Panc1 (cell line): ENCODE measurements at regions of chr10 and their contacts with region 1.

Region 1: DNA sequence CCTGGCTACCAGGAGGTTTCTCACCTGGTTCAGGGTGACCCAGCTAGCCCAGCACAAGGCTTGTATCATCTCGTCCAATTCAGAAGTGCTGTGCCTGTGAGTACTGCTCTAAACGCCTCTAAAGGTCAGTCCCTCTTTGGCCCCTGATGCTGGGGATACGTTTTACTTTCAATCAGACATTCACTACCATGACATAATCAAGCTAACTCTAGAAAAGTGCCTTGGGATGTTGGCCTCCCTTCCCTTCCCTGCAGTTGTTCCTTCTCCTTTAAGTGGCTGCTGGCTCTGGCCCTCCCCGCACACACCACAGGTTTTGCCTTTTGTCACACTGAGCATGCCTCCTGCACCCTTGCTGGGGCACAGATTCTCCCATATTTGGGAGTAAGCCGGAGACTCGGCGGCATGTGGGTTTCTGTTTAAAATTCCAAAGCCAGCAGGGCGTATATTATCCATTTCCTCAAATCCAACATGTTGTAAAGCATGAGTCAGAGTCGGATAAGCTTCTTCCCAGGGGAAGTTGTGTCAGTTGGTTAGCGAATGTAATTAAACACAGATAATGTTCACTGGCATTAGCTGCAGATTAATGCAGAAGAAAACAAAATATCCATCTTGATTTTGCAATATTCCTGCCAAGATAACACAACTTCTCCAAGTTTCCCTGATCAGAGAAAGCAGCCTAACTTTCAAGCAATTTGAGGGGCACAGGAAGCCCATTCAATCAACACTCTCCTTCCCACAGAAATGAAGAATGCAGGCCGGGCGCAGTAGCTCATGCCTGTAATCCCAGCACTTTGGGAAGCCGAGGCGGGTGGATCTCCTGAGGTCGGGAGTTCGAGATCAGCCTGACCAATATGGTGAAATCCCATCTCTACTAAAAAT is 31.8 kb upstream of the VCL start:
- DNase-seq: peak; percentile 97
- ATAC-seq: peak; percentile 96
- H3K4me3 ChIP-seq: peak overlapping the region; percentile 10 to 47; a peak in 3 of 4 replicates
- H3K27ac ChIP-seq: peak overlapping the region; percentile 99
- H3K4me1 ChIP-seq: peaks cover 57% of the 10 kb centered on the region
- H3K27me3 ChIP-seq: no peaks in the 10 kb centered on the region
- CTCF ChIP-seq: no peak

Region 2: DNA sequence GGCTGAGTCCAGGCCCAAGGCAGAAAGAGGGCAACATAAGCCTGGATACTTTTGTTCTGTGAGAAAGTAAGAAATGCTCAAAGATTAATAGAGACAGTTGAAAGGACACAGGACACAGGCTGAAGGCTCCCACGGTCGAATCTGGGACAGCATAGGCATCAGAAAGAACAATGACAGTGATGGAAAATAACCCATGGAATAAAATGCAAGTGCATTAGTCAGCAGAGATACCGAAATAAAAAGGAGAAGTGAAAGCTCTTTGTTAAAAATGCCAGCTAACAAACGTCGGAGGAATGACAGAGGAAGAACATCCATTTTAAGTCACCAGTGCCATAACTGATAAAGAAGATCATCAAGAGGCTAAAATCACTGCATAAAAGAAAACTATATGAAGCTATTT is 248.6 kb before region 1 on chr10:
- CTCF ChIA-PET with region 1: no interaction called
- POLR2A ChIA-PET with region 1: no interaction called
- in situ Hi-C with region 1: no loop called
- intact Hi-C with region 1: no loop called
- DNase-seq: no peak
- ATAC-seq: no peak
- H3K4me3 ChIP-seq: no peak overlapping the region
- H3K27ac ChIP-seq: no peak overlapping the region
- H3K4me1 ChIP-seq: no peaks in the 10 kb centered on the region
- H3K27me3 ChIP-seq: no peaks in the 10 kb centered on the region
- CTCF ChIP-seq: no peak

Region 3: DNA sequence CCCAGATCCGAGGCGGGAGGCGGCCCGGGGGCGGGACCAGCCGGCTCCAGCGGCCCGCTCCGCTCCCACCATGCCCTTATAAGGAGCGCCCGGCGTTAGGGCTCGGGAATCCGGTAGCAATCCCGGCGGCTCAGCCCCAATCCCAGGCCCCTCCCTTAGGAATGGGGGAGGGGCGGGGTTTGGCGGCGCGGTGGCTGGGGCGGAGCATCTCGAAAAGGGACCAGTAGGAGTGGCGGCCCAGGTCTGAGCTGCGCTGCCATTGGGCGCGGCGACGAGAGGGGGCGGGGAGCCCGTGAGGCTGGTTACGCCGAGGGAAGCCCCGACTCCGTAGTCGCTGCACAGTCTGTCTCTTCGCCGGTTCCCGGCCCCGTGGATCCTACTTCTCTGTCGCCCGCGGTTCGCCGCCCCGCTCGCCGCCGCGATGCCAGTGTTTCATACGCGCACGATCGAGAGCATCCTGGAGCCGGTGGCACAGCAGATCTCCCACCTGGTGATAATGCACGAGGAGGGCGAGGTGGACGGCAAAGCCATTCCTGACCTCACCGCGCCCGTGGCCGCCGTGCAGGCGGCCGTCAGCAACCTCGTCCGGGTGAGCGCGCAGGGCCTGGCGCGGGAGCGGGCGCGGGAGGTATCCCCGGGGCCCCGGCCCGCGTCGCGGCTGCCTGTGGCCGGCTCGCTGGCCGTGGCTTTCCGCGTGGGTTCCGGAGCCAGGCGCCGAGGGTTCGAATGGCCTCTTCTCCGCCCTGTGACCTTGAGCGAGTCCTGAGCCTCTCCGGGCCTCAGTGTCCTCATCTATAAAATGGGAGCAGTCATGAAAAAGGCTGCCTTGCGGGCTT is 31.9 kb after region 1 on chr10 and contains the start of gene VCL:
- CTCF ChIA-PET with region 1: interaction called, 3 read pairs
- POLR2A ChIA-PET with region 1: interaction called, 13 read pairs
- in situ Hi-C with region 1: no loop called
- intact Hi-C with region 1: no loop called
- DNase-seq: no peak
- ATAC-seq: peak; percentile 93
- H3K4me3 ChIP-seq: peak within 1 kb of the TSS; percentile 69 to 95
- H3K27ac ChIP-seq: peak within 1 kb of the TSS; percentile 98
- H3K4me1 ChIP-seq: peaks cover 43% of the 10 kb centered on the region
- H3K27me3 ChIP-seq: no peaks in the 10 kb centered on the region
- CTCF ChIP-seq: no peak
- total RNA-seq, gene VCL: 495 TPM

Region 4: GRCh38 chr10:74008212-74008731 is 42.1 kb after region 1 on chr10:
- CTCF ChIA-PET with region 1: no interaction called
- POLR2A ChIA-PET with region 1: no interaction called
- in situ Hi-C with region 1: loop called (anchors 10 kb)
- intact Hi-C with region 1: no loop called
- DNase-seq: no peak
- ATAC-seq: no peak
- H3K4me3 ChIP-seq: no peak overlapping the region
- H3K27ac ChIP-seq: peak overlapping the region; percentile 70
- H3K4me1 ChIP-seq: peaks cover 83% of the 10 kb centered on the region
- H3K27me3 ChIP-seq: no peaks in the 10 kb centered on the region
- CTCF ChIP-seq: no peak

Region 5: DNA sequence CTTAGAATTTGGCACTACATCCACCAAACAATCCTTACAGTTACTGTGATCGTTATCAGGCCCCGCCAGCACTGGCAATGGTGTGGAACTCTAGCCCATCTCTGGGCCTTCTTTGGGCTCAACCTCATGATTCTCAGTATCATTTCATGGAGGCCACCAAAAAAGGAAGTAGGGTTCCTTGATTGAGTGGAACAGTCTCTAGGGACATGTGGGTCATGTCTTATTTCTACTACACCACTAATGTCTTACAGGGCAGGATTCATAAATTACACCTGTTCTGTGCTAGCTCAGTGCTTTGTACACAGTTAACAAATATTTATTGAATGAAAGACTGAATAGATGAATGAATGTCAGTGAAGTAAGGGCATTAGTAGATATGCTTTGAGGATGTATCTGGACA is 130.6 kb after region 1 on chr10:
- CTCF ChIA-PET with region 1: no interaction called
- POLR2A ChIA-PET with region 1: no interaction called
- in situ Hi-C with region 1: no loop called
- intact Hi-C with region 1: no loop called
- DNase-seq: no peak
- ATAC-seq: no peak
- H3K4me3 ChIP-seq: no peak overlapping the region
- H3K27ac ChIP-seq: no peak overlapping the region
- H3K4me1 ChIP-seq: no peaks in the 10 kb centered on the region
- H3K27me3 ChIP-seq: no peaks in the 10 kb centered on the region
- CTCF ChIP-seq: no peak

Region 6: DNA sequence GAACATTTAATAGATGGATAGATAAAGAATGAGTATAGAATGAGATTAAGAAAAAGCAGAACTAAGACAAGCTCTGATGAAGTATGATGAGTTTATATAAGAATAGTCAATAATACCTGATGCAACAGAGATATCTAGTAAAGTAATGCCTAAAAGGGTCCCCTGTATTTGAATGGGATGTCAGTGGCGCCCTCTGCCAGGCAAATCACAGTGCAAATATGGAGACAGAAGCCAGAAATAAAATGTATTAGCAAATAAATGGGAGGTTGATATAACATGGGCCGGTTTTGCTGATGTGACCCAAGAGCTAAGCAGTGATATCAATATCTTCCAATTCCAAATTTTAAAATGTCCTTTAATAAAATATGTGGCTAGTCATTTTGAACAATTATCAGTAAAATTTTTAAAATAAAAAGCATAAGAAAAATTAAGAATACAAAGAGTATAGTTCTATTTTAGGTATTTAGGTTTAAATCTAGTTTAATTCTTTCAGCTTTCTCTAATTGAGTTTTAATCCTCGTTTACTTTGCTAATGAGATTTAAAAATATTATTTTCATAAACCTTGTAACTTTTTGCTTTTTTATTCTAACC is 247.5 kb after region 1 on chr10:
- CTCF ChIA-PET with region 1: no interaction called
- POLR2A ChIA-PET with region 1: interaction called, 13 read pairs
- in situ Hi-C with region 1: no loop called
- intact Hi-C with region 1: no loop called
- DNase-seq: no peak
- ATAC-seq: peak; percentile 74; the same call in 1 of the 2 replicates
- H3K4me3 ChIP-seq: no peak overlapping the region
- H3K27ac ChIP-seq: no peak overlapping the region
- H3K4me1 ChIP-seq: no peaks in the 10 kb centered on the region
- H3K27me3 ChIP-seq: no peaks in the 10 kb centered on the region
- CTCF ChIP-seq: peak; percentile 77; the same call in 1 of the 2 replicates

Region 7: GRCh38 chr10:74425456-74426001 is 459.4 kb after region 1 on chr10:
- CTCF ChIA-PET with region 1: no interaction called
- POLR2A ChIA-PET with region 1: no interaction called
- in situ Hi-C with region 1: no loop called
- intact Hi-C with region 1: no loop called
- DNase-seq: no peak
- ATAC-seq: no peak
- H3K4me3 ChIP-seq: no peak overlapping the region
- H3K27ac ChIP-seq: no peak overlapping the region
- H3K4me1 ChIP-seq: no peaks in the 10 kb centered on the region
- H3K27me3 ChIP-seq: no peaks in the 10 kb centered on the region
- CTCF ChIP-seq: no peak